IMR-90 (cell line): ENCODE measurements at regions of chr4 and their contacts with region 1.

Region 1: GRCh38 chr4:22824091-22824490 is 131.4 kb downstream of the GBA3 start:
- DNase-seq: no peak
- ATAC-seq: no peak
- H3K4me3 ChIP-seq: no peak overlapping the region
- H3K27ac ChIP-seq: no peak overlapping the region
- H3K4me1 ChIP-seq: no peaks in the 10 kb centered on the region
- H3K27me3 ChIP-seq: no peaks in the 10 kb centered on the region
- CTCF ChIP-seq: no peak
- POLR2A ChIP-seq: no peak
- RAD21 ChIP-seq: no peak

Region 2: GRCh38 chr4:22842360-22843018 is 18.4 kb after region 1 on chr4:
- CTCF ChIA-PET with region 1: interaction called, 11 read pairs
- POLR2A ChIA-PET with region 1: no interaction called
- dilution Hi-C with region 1: no loop called
- in situ Hi-C with region 1: no loop called
- intact Hi-C with region 1: no loop called
- DNase-seq: no peak
- ATAC-seq: no peak
- H3K4me3 ChIP-seq: no peak overlapping the region
- H3K27ac ChIP-seq: no peak overlapping the region
- H3K4me1 ChIP-seq: no peaks in the 10 kb centered on the region
- H3K27me3 ChIP-seq: no peaks in the 10 kb centered on the region
- CTCF ChIP-seq: no peak
- POLR2A ChIP-seq: no peak
- RAD21 ChIP-seq: no peak